Activated CD8-positive, alpha-beta T cell treated with anti-CD3 and anti-CD28 coated beads, Interleukin-2, amount 10 ng/mL, durations not matched to agents 7 days and 5 days (primary cell): ENCODE measurements at regions of chr6 and their contacts with region 1.

Region 1: DNA sequence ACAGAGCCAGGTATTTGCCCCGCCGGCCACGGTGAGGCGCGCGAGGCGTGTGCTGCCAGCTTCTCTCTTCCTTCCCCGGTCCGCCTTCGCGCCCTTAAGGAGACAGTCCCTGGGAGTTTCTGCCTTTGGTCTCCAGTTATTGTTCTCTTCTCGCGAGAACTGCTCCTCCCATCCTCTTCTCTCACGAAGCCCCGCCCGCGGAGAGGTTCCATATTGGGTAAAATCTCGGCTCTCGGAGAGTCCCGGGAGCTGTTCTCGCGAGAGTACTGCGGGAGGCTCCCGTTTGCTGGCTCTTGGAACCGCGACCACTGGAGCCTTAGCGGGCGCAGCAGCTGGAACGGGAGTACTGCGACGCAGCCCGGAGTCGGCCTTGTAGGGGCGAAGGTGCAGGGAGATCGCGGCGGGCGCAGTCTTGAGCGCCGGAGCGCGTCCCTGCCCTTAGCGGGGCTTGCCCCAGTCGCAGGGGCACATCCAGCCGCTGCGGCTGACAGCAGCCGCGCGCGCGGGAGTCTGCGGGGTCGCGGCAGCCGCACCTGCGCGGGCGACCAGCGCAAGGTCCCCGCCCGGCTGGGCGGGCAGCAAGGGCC is at the start of gene MAPK14:
- DNase-seq: peak; percentile 99
- ATAC-seq: peak; percentile 90
- H3K4me3 Mint-ChIP-seq: peak within 1 kb of the TSS; percentile 85
- H3K27ac Mint-ChIP-seq: peak within 1 kb of the TSS; percentile 91
- H3K4me1 Mint-ChIP-seq: peaks cover 39% of the 10 kb centered on the region
- H3K27me3 Mint-ChIP-seq: peaks cover 18% of the 10 kb centered on the region
- total RNA-seq, gene MAPK14: 59.3 to 59.5 TPM

Region 2: DNA sequence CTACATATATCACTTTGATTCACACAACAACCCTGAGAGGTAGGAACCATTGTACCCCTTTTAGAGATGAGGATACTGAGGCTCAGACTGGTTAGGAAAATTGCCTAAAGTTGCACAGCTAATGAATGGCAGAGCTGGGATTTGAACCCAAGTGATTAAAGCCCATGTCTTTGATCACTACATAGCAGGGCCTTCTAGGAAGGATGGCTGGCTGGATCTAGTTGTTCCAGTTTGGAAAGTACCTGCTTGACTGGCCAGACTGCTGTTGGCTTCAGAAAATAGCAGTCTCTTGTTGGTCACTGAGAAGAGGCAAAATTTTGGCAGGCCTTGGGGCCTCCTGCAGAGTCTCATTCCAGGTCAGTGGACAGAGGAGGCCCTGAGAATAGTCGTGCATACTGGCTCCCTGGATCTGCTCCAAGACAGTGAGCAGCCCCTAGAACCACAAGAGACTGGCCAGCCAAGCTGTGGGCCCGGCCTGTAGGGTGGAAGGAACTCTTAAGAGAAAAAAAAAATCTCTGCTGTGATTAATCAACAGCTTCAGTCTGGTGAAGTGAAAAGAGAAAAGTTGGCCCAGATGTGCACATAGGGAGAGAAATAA is 667.7 kb before region 1 on chr6:
- CTCF ChIA-PET with region 1: no interaction called
- POLR2A ChIA-PET with region 1: no interaction called
- DNase-seq: no peak
- ATAC-seq: no peak
- H3K4me3 Mint-ChIP-seq: no peak overlapping the region
- H3K27ac Mint-ChIP-seq: peak overlapping the region; percentile 17
- H3K4me1 Mint-ChIP-seq: peaks cover 41% of the 10 kb centered on the region
- H3K27me3 Mint-ChIP-seq: no peaks in the 10 kb centered on the region

Region 3: GRCh38 chr6:36000451-36000850 is 27.1 kb before region 1 on chr6:
- CTCF ChIA-PET with region 1: no interaction called
- POLR2A ChIA-PET with region 1: no interaction called
- DNase-seq: no peak
- ATAC-seq: no peak
- H3K4me3 Mint-ChIP-seq: no peak overlapping the region
- H3K27ac Mint-ChIP-seq: no peak overlapping the region
- H3K4me1 Mint-ChIP-seq: no peaks in the 10 kb centered on the region
- H3K27me3 Mint-ChIP-seq: peaks cover 9% of the 10 kb centered on the region

Region 4: DNA sequence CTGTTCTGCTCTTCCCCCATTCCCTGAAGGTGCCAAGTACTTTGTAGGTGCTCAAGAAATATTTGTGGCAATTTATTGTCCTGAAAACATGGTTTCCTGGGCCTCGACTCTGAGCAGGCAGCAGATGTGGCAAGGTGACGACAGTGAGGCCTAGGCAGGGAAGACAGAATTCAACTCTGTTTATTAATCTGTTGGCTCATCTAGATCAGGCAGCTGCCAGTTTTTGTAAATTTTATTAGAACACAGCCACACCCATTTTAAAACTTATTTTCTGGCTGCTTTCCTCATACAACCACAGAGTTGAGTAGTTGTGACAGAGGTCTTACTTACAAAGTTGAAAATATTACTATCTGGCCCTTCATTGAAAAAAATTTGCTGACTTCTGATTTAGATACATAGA is 24.5 kb after region 1 on chr6:
- CTCF ChIA-PET with region 1: interaction called, 13 read pairs
- POLR2A ChIA-PET with region 1: interaction called, 3 read pairs
- DNase-seq: no peak
- ATAC-seq: no peak
- H3K4me3 Mint-ChIP-seq: no peak overlapping the region
- H3K27ac Mint-ChIP-seq: no peak overlapping the region
- H3K4me1 Mint-ChIP-seq: peaks cover 2% of the 10 kb centered on the region
- H3K27me3 Mint-ChIP-seq: no peaks in the 10 kb centered on the region

Region 5: DNA sequence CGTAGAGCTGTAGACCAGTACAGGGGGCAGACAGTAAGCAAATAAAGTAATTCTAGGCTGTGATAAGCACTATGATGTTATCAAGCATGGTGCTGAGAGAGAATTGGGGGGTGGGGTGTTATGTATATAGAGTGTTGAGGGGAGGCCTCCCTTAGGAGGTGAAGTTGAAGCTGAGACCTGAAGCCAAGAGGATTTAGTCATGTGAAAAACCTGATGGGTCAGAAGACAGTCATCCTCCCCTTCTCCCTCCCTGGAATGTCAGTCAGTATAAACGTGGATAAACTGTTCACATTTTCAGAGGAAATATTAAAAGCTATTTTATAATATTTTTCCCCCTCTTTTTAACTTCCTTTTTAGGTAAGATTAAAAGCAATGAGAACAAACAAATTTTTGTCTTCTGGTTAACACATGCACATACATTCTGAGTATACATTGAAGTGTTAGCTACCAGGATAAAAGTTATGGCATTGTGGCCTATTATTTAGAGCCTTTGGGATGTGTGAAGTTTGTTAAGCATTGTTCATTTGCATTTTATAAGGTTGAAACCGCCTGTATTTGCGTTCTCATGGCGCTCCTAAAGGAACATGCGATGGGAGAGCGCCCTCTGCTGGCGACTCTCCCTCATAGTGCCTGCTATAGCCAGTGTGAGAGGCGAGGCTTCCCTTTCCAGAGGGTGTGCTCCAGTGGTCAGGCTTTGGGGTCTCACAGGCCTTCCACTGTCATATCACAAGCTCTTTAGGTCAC is 67.3 kb after region 1 on chr6:
- CTCF ChIA-PET with region 1: interaction called, 174 read pairs
- POLR2A ChIA-PET with region 1: interaction called, 37 read pairs
- DNase-seq: peak; percentile 85
- ATAC-seq: peak; percentile 93
- H3K4me3 Mint-ChIP-seq: no peak overlapping the region
- H3K27ac Mint-ChIP-seq: no peak overlapping the region
- H3K4me1 Mint-ChIP-seq: peaks cover 28% of the 10 kb centered on the region
- H3K27me3 Mint-ChIP-seq: no peaks in the 10 kb centered on the region

Region 6: GRCh38 chr6:36123257-36124139 is 95.9 kb after region 1 on chr6:
- CTCF ChIA-PET with region 1: interaction called, 30 read pairs
- POLR2A ChIA-PET with region 1: interaction called, 30 read pairs
- DNase-seq: peak; percentile 95
- ATAC-seq: peak; percentile 80
- H3K4me3 Mint-ChIP-seq: no peak overlapping the region
- H3K27ac Mint-ChIP-seq: peak overlapping the region; percentile 98
- H3K4me1 Mint-ChIP-seq: peaks cover 91% of the 10 kb centered on the region
- H3K27me3 Mint-ChIP-seq: no peaks in the 10 kb centered on the region

Region 7: DNA sequence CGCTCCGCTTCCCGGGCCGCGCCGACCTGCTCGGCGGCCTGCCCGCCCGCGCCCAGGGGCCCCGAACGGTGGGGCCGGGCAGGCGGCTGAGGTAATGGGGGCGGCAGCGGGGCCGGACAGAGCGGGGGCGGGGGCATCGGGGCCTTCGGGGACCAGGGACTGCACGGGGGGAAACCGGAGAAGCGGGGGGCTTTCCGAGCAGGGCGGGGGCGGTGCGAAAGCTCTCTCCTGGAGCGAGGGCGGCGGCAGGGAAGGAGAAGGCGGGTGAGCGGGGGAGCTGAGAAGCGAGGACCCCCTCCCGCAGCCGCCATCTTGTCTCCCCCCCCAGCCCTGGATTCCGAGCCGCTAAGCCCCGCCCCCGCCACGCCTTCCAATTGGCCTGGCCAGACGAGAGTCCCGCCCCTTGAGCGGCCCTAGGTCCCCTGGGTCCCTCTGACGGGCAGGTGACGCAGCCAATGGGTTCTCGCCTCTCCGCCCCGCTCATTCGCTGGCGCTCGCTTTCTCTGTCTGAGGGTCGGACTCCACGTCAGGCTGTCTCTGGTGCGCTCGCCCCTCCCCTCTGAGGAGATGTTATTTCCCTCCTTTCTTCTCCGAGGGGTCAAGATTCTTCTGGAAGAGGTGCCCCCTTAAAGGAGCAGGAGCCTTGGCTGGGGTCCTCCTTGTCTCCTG is 169.4 kb after region 1 on chr6:
- CTCF ChIA-PET with region 1: interaction called, 15 read pairs
- POLR2A ChIA-PET with region 1: interaction called, 17 read pairs
- DNase-seq: peak; percentile 99
- ATAC-seq: peak; percentile 96
- H3K4me3 Mint-ChIP-seq: peak overlapping the region; percentile 84
- H3K27ac Mint-ChIP-seq: peak overlapping the region; percentile 94
- H3K4me1 Mint-ChIP-seq: peaks cover 46% of the 10 kb centered on the region
- H3K27me3 Mint-ChIP-seq: peaks cover 2% of the 10 kb centered on the region